Common myeloid progenitor, CD34-positive (primary cell): ENCODE measurements at regions of chr2 and their contacts with region 1.

Region 1: DNA sequence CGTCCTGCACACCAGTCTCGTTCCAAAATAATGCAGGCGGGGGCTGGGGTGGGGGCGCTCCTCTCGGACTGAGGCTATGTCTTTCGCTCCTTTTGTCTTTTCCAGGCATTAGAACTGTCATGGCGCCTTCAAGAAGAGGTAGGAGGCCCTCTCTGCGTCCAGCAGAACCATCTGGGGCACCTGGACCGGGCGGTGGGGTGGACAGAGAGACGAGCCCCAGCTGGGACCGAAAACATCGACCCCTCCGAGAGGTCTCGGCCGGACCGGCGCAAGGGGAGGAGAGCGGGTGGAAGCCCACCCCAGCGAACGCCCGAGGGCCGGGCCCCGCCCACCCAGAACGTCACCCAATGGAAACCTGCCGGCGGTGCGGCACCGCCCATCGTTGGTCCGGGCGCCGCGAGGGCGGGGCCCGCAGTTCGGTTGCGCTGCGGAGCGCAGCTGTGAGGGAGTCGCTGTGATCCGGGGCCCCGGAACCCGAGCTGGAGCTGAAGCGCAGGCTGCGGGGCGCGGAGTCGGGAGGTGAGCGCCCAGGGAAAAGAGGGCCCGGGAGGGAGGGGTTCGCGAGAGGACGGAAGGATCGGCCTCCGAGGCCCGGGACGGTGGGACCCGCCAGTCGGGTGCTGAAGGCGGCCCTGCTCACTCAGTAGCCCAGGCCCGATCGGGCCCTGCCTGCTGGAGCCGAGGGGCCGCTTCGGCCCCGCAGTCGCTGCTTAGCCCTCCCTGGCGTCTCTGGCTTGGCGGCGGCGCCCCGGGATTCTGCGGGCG is at the start of gene NRBP1:
- DNase-seq: peak; percentile 87 to 92 (median 92)
- H3K4me3 ChIP-seq: peak within 1 kb of the TSS; percentile 61 to 96 (median 92)
- H3K27ac ChIP-seq: peak within 1 kb of the TSS; percentile 92 to 96
- H3K4me1 ChIP-seq: peaks cover 12 to 28% (median 19%) of the 10 kb centered on the region in 4 experiments
- H3K27me3 ChIP-seq: no peaks in the 10 kb centered on the region

Region 2: DNA sequence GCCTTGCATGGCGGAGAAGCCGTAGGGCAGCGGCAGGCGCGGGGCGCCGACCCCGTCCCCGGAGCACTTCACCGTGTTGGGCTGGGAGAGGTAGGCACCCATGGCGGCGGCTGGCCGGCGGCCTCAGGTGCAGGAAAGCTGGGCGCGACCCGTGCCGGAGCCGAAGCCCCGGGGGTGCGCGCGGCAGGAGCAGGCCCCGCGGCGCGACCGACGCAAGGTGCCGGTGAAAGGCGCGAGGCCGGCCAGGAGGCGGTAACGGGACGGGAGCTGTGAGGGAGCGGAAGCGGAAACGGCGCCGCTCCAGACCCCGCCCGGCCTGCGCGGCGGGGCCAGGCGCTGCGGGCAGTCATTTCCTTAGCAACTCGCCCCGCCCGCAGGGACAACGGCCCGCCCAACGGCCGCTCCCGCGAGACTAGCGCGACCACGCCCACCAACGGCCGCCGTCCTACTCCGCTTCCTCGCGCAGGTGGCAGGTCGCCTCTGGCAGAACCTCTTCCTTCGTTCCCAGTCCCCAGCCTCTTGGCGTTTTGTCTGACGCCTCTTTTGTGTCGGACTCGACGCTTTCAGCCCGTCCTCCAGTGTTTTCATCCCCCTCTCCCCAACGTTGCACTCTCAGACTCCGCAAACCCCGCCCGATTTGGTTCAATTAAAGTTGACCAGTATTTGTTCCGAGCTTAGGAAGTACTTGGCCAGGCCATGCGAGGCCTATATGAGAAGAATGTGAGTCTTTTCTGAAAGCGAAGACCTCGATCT is 18.9 kb before region 1 on chr2 and contains the start of gene PPM1G:
- CTCF ChIA-PET with region 1: interaction called, 45 read pairs
- POLR2A ChIA-PET with region 1: interaction called, 10 read pairs
- DNase-seq: peak; percentile 96 to 97 (median 97)
- H3K4me3 ChIP-seq: peak within 1 kb of the TSS; percentile 82 to 97 (median 91)
- H3K27ac ChIP-seq: peak within 1 kb of the TSS; percentile 70 to 90
- H3K4me1 ChIP-seq: peaks cover 13 to 18% (median 15%) of the 10 kb centered on the region in 4 experiments
- H3K27me3 ChIP-seq: no peaks in the 10 kb centered on the region

Region 3: GRCh38 chr2:27440646-27441045 is 12.3 kb after region 1 on chr2:
- CTCF ChIA-PET with region 1: interaction called, 13 read pairs
- POLR2A ChIA-PET with region 1: interaction called, 3 read pairs
- DNase-seq: no peak
- H3K4me3 ChIP-seq: no peak overlapping the region
- H3K27ac ChIP-seq: no peak overlapping the region
- H3K4me1 ChIP-seq: peaks cover 0 to 9% (median 3%) of the 10 kb centered on the region in 4 experiments
- H3K27me3 ChIP-seq: no peaks in the 10 kb centered on the region